ENCODE measurements at regions of chr10 and their contacts with region 1.

Region 1: DNA sequence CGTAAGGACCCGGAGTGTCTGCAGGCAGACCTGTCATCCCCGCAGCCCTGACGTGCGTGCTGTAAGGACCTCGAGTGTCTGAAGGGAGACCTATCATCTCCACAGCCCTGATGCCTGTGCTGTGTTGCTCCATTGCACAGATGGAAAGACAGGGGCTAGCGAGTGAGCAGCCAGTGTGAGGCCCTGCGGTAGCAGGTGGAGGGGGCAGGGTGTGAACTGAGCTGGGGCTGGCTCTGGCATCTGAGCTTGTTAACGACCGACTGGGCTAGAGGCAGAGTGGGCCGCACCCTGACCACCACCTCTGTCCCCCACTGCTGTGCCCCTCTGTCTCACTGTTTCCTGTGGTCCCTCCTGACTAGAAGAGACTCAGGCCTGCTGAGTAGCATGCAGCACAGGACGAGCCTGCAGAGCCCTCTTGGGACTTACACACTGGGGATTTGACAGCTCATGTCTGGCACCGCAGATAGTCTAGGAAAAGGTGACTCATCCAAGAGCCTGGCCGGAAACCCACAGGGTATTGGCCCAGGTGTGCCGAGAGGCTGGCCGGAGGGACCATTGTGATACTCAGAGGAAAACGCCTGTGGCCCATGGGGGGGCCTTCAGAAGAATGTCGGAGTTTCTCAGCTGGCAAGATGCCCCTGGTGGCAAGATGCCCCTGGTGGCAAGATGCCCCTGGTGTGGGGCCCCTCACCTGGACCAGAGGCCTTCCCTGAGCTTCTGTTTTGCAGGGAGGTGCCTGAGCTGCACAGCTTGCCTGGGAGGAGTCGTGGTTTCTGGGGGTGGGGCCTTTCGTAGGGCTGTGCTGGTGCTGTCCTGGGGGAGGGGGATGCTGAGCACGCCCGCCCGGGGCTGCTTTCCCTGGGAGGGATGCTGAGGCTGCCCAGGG is 34.3 kb downstream of the INPP5A start:
- DNase-seq: peak; percentile 72
- H3K4me3 Mint-ChIP-seq: peak overlapping the region; percentile 18
- H3K27ac Mint-ChIP-seq: peak overlapping the region; percentile 64
- H3K4me1 Mint-ChIP-seq: peaks cover 21% of the 10 kb centered on the region
- H3K27me3 Mint-ChIP-seq: peaks cover 4% of the 10 kb centered on the region

Region 2: DNA sequence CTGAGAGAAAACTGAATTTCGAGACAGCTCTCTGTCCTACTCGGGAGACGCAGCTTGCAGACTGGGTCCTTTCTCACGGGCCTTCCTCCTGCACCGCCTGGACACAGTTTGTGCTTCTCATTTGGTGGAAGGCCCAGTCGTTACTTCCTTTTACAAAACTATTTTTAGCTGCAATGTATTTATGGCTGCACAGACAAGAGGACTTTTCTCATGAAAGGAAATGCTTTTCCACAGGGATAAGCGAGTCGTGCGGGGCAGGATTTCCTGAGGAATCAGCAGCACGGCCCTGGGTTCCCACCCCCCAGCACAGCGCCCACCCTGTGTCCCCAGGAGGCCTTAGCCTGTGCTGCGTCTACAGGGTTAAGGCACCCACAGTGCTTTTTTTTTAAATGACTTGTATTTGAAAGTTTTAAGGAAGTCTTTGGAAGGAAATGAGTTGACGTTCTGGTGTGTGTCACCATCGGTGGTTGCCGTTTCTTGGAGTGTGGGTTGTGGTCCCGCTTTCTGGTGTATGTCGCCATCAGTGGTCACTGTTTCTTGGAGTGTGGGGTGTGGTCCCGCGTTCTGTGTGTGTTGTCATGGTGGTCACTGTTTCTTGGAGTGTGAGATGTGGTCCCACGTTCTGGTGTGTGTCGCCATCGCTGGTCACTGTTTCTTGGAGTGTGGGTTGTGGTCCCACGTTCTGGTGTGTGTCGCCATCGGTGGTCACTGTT is 16.6 kb after region 1 on chr10:
- intact Hi-C with region 1: loop called (anchors 1 kb)
- DNase-seq: peak; percentile 28
- H3K4me3 Mint-ChIP-seq: no peak overlapping the region
- H3K27ac Mint-ChIP-seq: peak overlapping the region; percentile 38
- H3K4me1 Mint-ChIP-seq: peaks cover 32% of the 10 kb centered on the region
- H3K27me3 Mint-ChIP-seq: no peaks in the 10 kb centered on the region

Measured in activated T-helper 2 cell treated with anti-CD3 and anti-CD28 coated beads, Interferon-gamma antibody, Interleukin-2, Interleukin-4, amounts not matched to agents 10 μg/mL and 5 μg/mL and 100 μg/mL, durations not matched to agents 14 hours and 24 hours and 36 hours (primary cell).